ENCODE measurements at regions of chr1 and their contacts with region 1.

Region 1: GRCh38 chr1:30911046-30911954 is 2.7 kb upstream of the SDC3 start:
- DNase-seq: peak; percentile 89 to 90
- ATAC-seq: peak; percentile 83 to 91 (median 84)
- H3K4me3 ChIP-seq: no peak overlapping the region
- H3K27ac ChIP-seq: no peak overlapping the region
- H3K4me1 ChIP-seq: no peaks in the 10 kb centered on the region
- H3K27me3 ChIP-seq: peaks cover 0 to 6% (median 0%) of the 10 kb centered on the region in 3 donors
- CTCF ChIP-seq: peak; percentile 84

Region 2: DNA sequence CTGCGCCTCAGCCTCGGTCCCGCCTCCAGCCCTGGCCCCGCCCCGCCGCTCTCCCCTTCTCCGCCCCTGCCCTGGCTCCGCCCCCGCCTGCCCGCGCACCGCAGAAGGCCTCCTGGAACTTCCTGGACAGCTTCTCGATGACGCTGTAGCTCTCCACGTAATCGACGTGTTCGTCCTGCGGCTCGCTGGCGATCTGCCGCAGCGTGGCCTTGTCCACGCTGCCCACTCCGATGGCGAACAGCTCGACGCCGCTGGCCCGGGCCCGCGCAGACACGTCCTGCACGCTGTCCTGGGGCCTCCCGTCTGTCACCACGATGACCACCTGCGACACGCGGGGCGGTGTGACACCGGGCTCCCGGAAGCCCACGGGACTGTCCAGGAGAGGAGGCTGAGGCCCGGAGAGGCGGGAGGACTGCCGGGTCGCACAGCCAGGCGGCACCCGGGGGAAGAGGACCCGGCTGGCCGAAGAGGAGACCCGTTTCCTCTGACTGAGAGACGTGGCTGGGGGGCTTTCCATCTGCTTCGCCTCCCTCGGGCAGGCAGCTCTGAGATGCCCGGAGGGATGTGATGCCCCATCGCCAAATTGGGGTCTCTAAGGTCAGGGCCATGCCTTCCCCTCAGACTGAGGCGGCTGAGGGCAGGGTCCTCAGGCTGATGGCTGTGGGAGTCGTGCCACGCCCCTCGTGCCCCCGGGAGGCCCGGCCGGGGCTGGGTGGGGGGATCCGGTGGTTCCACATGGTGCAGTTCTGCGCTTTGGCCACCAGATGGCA is 192.5 kb before region 1 on chr1:
- intact Hi-C with region 1: loop called (anchors 2 to 5 kb)
- DNase-seq: peak; percentile 77 to 90
- ATAC-seq: peak; percentile 84 to 87 (median 86)
- H3K4me3 ChIP-seq: peak overlapping the region; percentile 55
- H3K27ac ChIP-seq: peak overlapping the region; percentile 92
- H3K4me1 ChIP-seq: peaks cover 3% of the 10 kb centered on the region
- H3K27me3 ChIP-seq: no peaks in the 10 kb centered on the region
- CTCF ChIP-seq: peak; percentile 100

Region 3: DNA sequence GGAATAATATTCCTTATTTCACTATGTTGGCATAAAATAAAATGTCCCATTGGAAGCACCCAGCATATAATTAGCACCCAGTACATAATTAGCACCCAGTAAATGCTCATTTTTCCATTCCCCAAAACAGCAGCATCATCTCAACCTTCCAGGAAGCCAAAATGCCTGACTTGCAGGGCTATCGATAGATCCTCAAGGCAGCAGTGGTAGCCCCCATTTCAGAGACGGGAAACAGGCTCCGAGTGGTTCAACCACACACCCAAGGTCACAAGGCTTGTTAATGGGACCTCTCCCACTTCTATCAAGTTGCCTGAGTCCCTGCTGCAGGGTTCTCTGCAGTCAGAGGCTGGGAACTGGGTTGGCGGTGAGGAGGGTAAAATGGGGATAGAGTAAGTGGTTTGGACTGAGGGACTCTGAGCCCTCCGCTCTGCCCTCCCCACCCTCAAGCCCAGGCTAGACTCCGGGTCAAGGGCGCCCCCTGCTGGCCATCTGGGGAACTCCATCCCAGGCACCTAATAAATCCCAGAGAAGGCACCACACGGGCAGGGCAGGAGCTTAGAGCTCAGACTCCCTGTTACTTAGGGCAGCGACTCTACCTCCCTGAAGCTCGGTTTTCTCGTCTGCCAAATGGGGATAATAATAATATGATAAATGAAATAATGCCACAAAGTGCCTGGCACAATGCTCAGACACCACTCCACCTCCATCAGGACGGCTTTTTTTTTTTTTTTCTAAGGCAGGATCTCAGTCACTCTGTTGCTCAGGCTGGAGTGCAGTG is 131.8 kb before region 1 on chr1:
- intact Hi-C with region 1: loop called (anchors 1 to 2 kb)
- DNase-seq: peak; percentile 84 to 89
- ATAC-seq: peak; percentile 70 to 77 (median 73)
- H3K4me3 ChIP-seq: no peak overlapping the region
- H3K27ac ChIP-seq: no peak overlapping the region
- H3K4me1 ChIP-seq: peaks cover 10% of the 10 kb centered on the region
- H3K27me3 ChIP-seq: no peaks in the 10 kb centered on the region
- CTCF ChIP-seq: peak; percentile 93

Region 4: DNA sequence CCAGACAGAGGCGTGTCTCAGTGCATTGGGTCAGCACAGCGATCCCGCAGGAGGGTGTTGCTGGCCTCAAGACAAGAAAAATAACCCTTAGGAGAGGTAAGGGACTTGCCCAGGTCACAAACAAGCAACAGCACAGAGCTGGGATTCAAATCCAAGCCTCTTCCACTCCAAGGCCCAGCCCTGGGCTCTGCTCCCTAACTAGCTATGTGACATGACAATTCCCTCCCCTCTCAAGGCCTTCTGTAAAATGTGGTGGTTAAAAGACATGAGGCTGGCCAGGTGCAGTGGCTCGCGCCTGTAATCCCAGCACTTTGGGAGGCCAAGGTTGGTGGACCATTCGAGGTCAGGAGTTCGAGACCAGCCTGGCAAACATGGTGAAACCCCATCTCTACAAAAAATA is 125.6 kb before region 1 on chr1:
- intact Hi-C with region 1: loop called (anchors 1 to 2 kb)
- DNase-seq: no peak
- ATAC-seq: no peak
- H3K4me3 ChIP-seq: no peak overlapping the region
- H3K27ac ChIP-seq: no peak overlapping the region
- H3K4me1 ChIP-seq: peaks cover 10% of the 10 kb centered on the region
- H3K27me3 ChIP-seq: peaks cover 0 to 6% (median 0%) of the 10 kb centered on the region in 3 donors
- CTCF ChIP-seq: no peak

Region 5: GRCh38 chr1:30801771-30802198 is 109.5 kb before region 1 on chr1:
- intact Hi-C with region 1: loop called (anchors 1 to 2 kb)
- DNase-seq: peak; percentile 80 to 90
- ATAC-seq: peak; percentile 77 to 90 (median 83)
- H3K4me3 ChIP-seq: no peak overlapping the region
- H3K27ac ChIP-seq: no peak overlapping the region
- H3K4me1 ChIP-seq: no peaks in the 10 kb centered on the region
- H3K27me3 ChIP-seq: peaks cover 0 to 9% (median 0%) of the 10 kb centered on the region in 3 donors
- CTCF ChIP-seq: peak; percentile 94

Measured in psoas muscle (tissue), 8 donors.